ENCODE measurements at regions of chr10 and their contacts with region 1.

Region 1: DNA sequence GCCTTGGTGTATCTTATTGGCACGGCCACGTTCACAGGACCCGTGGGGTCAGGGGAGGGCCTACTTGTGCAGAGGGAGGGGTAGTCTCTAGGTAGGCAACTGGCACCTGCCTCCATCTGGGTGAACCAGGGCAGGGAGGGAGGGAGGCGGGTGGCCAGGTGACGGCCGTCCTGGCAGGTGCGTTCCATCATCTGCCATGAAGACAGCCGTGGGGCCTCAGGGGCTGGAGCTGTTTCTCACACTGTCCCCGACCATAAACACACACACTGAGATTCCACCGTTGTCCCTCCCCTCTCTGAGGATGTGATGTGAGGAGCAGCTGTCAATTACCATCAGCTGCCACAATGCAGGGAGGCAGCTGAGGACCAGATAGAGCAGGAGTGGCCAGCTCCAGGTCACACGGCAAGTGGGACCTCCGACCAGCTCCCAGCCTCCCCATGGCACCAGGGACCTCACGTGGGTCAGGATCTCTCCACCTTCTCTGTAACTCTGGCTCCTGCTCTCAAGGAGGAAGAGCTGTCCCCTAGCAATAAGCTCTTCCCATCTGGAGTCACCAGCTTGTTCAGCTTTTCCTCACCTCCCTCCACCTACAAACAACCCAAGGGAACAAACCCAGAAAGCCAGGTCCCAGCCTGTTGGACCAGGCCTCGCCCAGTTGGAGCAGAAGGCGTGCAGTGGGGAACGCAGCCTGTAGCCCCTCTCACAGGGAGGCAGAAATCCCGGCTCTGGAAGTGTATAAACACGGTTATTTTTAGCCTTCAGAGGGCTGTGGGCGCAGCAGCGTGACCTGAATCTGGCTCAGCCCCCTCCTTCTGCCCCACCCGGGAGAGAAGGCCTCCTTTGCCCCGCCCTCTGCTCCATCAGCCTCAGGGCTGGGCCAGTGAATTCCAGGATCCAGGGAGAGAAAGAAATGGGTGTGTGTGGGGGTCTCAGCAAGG is 33.1 kb downstream of the ZMIZ1 start:
- DNase-seq: no peak
- H3K4me3 ChIP-seq: no peak overlapping the region
- H3K27ac ChIP-seq: no peak overlapping the region
- H3K4me1 ChIP-seq: peaks cover 10 to 41% (median 21%) of the 10 kb centered on the region in 4 experiments
- H3K27me3 ChIP-seq: no peaks in the 10 kb centered on the region
- CTCF ChIP-seq: no peak
- EP300 ChIP-seq: no peak
- POLR2A ChIP-seq: no peak
- RAD21 ChIP-seq: no peak

Region 2: GRCh38 chr10:78991187-78991586 is 110.6 kb before region 1 on chr10:
- CTCF ChIA-PET with region 1: no interaction called
- POLR2A ChIA-PET with region 1: no interaction called
- DNase-seq: no peak
- H3K4me3 ChIP-seq: no peak overlapping the region
- H3K27ac ChIP-seq: no peak overlapping the region
- H3K4me1 ChIP-seq: peaks cover 0 to 6% (median 2%) of the 10 kb centered on the region in 4 experiments; a peak in 4 of 7 replicates
- H3K27me3 ChIP-seq: no peaks in the 10 kb centered on the region
- CTCF ChIP-seq: no peak
- EP300 ChIP-seq: no peak
- POLR2A ChIP-seq: no peak
- RAD21 ChIP-seq: no peak

Region 3: DNA sequence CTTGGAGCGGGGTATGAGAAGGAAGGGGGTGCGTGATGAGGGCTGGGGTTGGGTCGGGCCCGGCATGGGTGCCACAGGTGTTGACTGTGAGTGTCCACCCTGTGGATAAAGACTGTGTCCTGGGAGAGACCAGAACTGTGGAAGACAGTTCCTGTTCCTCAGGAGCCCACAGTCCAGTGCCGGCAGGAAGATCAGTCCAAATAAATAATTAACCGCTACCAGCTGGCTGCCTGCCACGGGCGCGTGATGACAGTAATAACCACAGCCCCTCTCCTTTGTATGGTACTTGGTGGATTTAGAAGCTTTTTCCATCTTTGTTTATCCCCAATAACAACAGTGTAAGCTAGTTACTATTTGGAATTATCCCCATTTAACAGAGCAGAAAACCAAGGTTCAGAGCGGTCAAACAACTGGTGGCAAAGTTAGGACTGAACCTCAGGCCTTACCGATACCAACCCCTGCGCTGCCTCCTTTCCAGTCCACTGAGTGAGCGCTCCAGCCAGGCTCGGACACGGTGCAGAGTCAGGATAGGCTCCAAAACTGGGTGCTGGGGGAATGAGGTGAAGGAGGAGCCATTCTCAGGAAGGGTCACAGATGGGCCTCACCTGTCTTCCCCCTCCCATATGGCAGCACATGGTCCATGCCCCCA is 27.9 kb before region 1 on chr10:
- CTCF ChIA-PET with region 1: interaction called, 10 read pairs
- POLR2A ChIA-PET with region 1: interaction called, 3 read pairs
- DNase-seq: no peak
- H3K4me3 ChIP-seq: no peak overlapping the region
- H3K27ac ChIP-seq: no peak overlapping the region
- H3K4me1 ChIP-seq: peaks cover 10 to 40% (median 25%) of the 10 kb centered on the region in 4 experiments
- H3K27me3 ChIP-seq: no peaks in the 10 kb centered on the region; a peak in 1 of 7 replicates
- CTCF ChIP-seq: no peak
- EP300 ChIP-seq: no peak
- POLR2A ChIP-seq: no peak
- RAD21 ChIP-seq: no peak

Region 4: GRCh38 chr10:79112881-79113431 is 11.1 kb after region 1 on chr10:
- CTCF ChIA-PET with region 1: interaction called, 10 read pairs
- POLR2A ChIA-PET with region 1: interaction called, 3 read pairs
- DNase-seq: no peak
- H3K4me3 ChIP-seq: no peak overlapping the region
- H3K27ac ChIP-seq: peak overlapping the region; percentile 35; the same call in 1 of the 2 replicates
- H3K4me1 ChIP-seq: peaks cover 6 to 37% (median 23%) of the 10 kb centered on the region in 4 experiments
- H3K27me3 ChIP-seq: no peaks in the 10 kb centered on the region
- CTCF ChIP-seq: no peak
- EP300 ChIP-seq: no peak
- POLR2A ChIP-seq: no peak
- RAD21 ChIP-seq: no peak

Region 5: DNA sequence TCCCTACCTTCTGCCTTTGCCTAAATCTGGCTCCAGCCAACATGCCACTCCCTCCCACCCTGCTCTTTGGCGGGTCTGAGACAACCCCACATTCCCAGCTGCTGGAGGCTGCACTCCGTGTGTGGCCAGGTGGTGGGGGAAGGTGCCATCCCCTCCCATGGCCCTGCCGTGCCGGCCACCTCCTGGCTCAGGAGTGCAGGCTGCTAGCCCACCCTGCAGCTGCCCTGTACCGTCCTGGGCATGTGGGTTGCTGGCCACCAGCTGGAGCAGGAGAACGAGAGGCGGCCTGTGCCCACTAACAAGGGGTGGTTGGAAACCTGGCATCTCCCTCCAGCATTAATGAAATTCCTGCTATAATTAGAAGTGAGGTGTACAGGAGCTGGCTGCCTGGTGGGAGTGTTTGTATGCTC is 64.5 kb after region 1 on chr10:
- CTCF ChIA-PET with region 1: no interaction called
- POLR2A ChIA-PET with region 1: no interaction called
- DNase-seq: no peak
- H3K4me3 ChIP-seq: no peak overlapping the region
- H3K27ac ChIP-seq: no peak overlapping the region
- H3K4me1 ChIP-seq: peaks cover 0 to 21% (median 8%) of the 10 kb centered on the region in 4 experiments; a peak in 6 of 7 replicates
- H3K27me3 ChIP-seq: no peaks in the 10 kb centered on the region; a peak in 1 of 7 replicates
- CTCF ChIP-seq: no peak
- EP300 ChIP-seq: no peak
- POLR2A ChIP-seq: no peak
- RAD21 ChIP-seq: no peak

Measured in H1 (cell line).